ENCODE measurements at regions of chr4 and their contacts with region 1.

Region 1: DNA sequence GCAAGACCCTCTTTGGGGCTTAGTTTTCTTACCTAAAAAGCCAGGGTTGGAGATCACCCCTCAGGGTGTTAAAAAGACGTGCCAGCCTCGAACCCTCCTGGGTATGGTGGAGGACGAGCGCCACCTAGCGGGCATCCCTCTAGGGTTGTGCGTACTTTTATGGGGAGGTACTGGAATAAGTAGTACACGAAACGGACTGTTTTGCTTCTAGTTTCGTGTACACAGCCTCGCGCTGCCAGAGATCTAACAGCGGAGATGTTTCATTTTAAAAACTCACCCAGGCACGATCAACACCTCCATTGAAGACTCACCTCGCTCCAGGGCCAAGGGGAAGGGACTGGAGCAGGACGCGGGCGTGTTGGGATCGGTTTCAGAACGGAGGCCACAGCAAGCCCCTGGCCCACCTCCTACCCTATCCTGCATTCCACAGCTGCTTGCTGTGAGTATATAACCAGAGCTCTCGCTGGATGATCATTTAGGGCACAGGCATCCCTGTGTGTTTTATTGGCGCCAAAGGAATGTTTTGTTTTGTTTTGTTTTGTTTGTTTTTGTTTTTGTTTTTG is 4.8 kb upstream of the NKX3-2 start:
- DNase-seq: peak; percentile 88
- H3K4me3 ChIP-seq: peak overlapping the region; percentile 43 to 71
- H3K27ac ChIP-seq: no peak overlapping the region
- H3K4me1 ChIP-seq: peaks cover 5% of the 10 kb centered on the region in 2 experiments; a peak in 2 of 4 replicates
- H3K27me3 ChIP-seq: peaks cover 36% of the 10 kb centered on the region
- CTCF ChIP-seq: peak; percentile 95
- EP300 ChIP-seq: no peak
- RAD21 ChIP-seq: peak; percentile 94

Region 2: DNA sequence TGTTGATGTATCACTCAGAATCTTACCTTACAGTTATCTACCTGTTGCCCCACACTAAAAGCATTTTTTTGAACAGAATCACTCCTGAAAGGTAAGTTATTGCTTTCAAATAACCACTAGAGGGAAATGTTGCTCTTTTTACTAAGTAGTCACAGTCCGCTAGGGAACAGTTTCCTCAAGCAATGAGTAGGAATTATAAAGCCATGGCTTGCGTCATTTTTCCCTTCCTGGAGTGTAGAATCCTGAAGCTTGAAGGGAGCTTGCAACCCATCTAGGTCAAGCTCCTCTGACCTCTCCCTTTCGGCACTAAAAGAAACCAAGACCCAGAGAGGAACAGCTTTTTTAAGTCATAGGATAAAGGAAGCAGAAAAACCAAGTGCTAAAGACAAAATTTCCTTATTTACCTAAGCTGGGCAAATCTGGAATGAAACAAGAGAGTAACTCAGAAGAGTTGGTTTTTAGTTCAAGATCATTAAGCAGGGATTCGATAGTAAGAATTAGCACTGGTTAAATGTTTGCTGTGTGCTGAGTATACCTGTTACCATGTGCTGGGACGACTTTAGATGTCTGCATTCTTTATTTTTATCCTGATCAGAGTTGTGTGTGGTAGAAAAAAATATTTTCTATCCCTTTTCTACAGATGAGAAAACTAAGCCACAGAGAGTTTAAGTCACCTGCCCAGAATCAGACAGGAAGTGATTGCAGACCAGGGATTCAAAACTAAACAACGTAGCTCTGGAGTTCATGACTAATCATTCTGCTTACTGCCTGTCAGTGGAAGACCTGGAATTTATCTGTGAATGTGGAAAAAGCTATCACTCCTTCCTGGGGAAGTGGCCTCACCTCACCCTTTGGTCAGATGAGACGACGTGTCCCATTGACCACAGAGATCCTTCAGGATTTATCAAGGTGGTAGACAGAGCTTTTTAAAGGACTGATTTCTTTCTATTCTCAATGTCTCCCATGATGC is 696.4 kb before region 1 on chr4:
- CTCF ChIA-PET with region 1: interaction called, 38 read pairs
- POLR2A ChIA-PET with region 1: no interaction called
- DNase-seq: peak; percentile 32
- H3K4me3 ChIP-seq: no peak overlapping the region
- H3K27ac ChIP-seq: no peak overlapping the region
- H3K4me1 ChIP-seq: no peaks in the 10 kb centered on the region
- H3K27me3 ChIP-seq: no peaks in the 10 kb centered on the region
- CTCF ChIP-seq: peak; percentile 67
- EP300 ChIP-seq: no peak
- RAD21 ChIP-seq: peak; percentile 81

Region 3: DNA sequence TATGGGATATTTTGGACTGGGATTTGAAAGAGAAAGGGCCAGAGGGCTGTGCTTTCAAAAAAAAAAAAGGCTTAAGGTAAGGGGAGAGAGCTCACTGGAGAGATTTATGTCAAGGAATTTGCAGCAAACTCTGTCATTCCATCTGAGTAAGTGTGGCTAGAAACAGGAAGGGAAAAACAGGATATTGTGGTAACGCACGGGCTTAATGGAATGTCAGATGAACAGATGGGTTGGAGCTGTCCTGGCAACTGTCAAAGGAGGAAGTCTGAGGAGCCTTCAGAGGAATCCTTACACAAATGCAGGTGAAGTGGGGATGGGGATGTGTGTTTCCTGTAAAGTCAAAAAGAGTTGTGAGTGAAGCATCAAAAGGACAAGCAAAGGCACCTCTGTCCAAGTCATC is 10.3 kb after region 1 on chr4:
- CTCF ChIA-PET with region 1: interaction called, 12 read pairs
- POLR2A ChIA-PET with region 1: no interaction called
- DNase-seq: no peak
- H3K4me3 ChIP-seq: no peak overlapping the region
- H3K27ac ChIP-seq: peak overlapping the region; percentile 60 to 81; a peak in 3 of 4 replicates
- H3K4me1 ChIP-seq: peaks cover 0 to 12% of the 10 kb centered on the region in 2 experiments; a peak in 1 of 4 replicates
- H3K27me3 ChIP-seq: no peaks in the 10 kb centered on the region
- CTCF ChIP-seq: no peak
- EP300 ChIP-seq: peak in 1 of 2 experiments; percentile 79; a peak in 1 of 4 replicates
- RAD21 ChIP-seq: no peak

Measured in SK-N-SH (cell line).